ENCODE measurements at regions of chr5 and their contacts with region 1.

Region 1: GRCh38 chr5:150498501-150498900 is 9.4 kb upstream of the NDST1 start:
- DNase-seq: no peak
- ATAC-seq: no peak; the same call in 2 of the 3 replicates
- H3K4me3 ChIP-seq: no peak overlapping the region
- H3K27ac ChIP-seq: no peak overlapping the region
- H3K4me1 ChIP-seq: peaks cover 33 to 54% of the 10 kb centered on the region in 2 experiments
- H3K27me3 ChIP-seq: no peaks in the 10 kb centered on the region
- CTCF ChIP-seq: no peak
- EP300 ChIP-seq: no peak
- POLR2A ChIP-seq: no peak
- RAD21 ChIP-seq: no peak

Region 2: GRCh38 chr5:150511578-150512367 is 13.3 kb after region 1 on chr5:
- CTCF ChIA-PET with region 1: no interaction called
- POLR2A ChIA-PET with region 1: interaction called, 16 read pairs
- in situ Hi-C with region 1: no loop called
- intact Hi-C with region 1: no loop called
- DNase-seq: peak; percentile 67 to 85 (median 79)
- ATAC-seq: peak; percentile 79
- H3K4me3 ChIP-seq: no peak overlapping the region
- H3K27ac ChIP-seq: no peak overlapping the region
- H3K4me1 ChIP-seq: peaks cover 29 to 35% of the 10 kb centered on the region in 2 experiments
- H3K27me3 ChIP-seq: no peaks in the 10 kb centered on the region
- CTCF ChIP-seq: no peak
- EP300 ChIP-seq: no peak
- POLR2A ChIP-seq: no peak
- RAD21 ChIP-seq: no peak

Measured in K562 (cell line).